CD4-positive, alpha-beta T cell (primary cell): ENCODE measurements at regions of chr7 and their contacts with region 1.

Region 1: GRCh38 chr7:6299774-6300173 is 27.4 kb upstream of the CYTH3 start:
- DNase-seq: no peak
- ATAC-seq: no peak
- H3K4me3 ChIP-seq: no peak overlapping the region
- H3K4me3 Mint-ChIP-seq: no peak overlapping the region
- H3K27ac ChIP-seq: no peak overlapping the region
- H3K27ac Mint-ChIP-seq: no peak overlapping the region
- H3K4me1 ChIP-seq: no peaks in the 10 kb centered on the region
- H3K4me1 Mint-ChIP-seq: no peaks in the 10 kb centered on the region
- H3K27me3 ChIP-seq: no peaks in the 10 kb centered on the region
- H3K27me3 Mint-ChIP-seq: peaks cover 5% of the 10 kb centered on the region
- CTCF ChIP-seq: no peak

Region 2: GRCh38 chr7:6248581-6248980 is 51.2 kb before region 1 on chr7:
- CTCF ChIA-PET with region 1: no interaction called
- POLR2A ChIA-PET with region 1: no interaction called
- intact Hi-C with region 1: loop called in 1 of 2 experiments (anchors 5 kb)
- DNase-seq: no peak
- ATAC-seq: no peak
- H3K4me3 ChIP-seq: no peak overlapping the region
- H3K4me3 Mint-ChIP-seq: no peak overlapping the region
- H3K27ac ChIP-seq: no peak overlapping the region
- H3K27ac Mint-ChIP-seq: no peak overlapping the region
- H3K4me1 ChIP-seq: no peaks in the 10 kb centered on the region
- H3K4me1 Mint-ChIP-seq: peaks cover 5% of the 10 kb centered on the region
- H3K27me3 ChIP-seq: no peaks in the 10 kb centered on the region
- H3K27me3 Mint-ChIP-seq: no peaks in the 10 kb centered on the region
- CTCF ChIP-seq: no peak